ENCODE measurements at regions of chr16 and their contacts with region 1.

Region 1: GRCh38 chr16:56324406-56324805 is 100.9 kb downstream of the AMFR start:
- DNase-seq: no peak
- H3K4me3 ChIP-seq: no peak overlapping the region
- H3K27ac ChIP-seq: no peak overlapping the region
- H3K4me1 ChIP-seq: no peaks in the 10 kb centered on the region
- H3K27me3 ChIP-seq: no peaks in the 10 kb centered on the region
- CTCF ChIP-seq: no peak
- EP300 ChIP-seq: no peak
- POLR2A ChIP-seq: no peak

Region 2: DNA sequence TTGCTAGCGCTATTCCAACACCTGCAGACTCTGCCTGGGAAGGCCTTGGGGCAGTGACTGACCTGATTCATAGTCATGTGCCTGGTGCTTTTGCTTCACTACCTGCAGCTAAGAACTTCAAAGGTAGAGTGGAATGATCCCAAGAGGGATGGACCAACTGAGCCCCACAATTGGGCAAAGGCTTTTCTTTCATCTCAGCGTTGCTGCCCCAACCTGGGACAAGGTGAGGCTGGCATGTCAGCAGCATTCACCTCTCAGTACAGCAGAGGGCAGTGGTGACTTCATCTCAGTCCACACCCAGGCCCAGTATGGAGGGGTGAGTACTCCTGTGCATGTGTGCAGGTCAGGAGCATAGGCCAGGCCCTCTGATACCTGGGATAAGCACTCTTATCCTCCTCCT is 282.7 kb before region 1 on chr16:
- in situ Hi-C with region 1: loop called in 2 of 4 experiments (anchors 10 to 25 kb)
- intact Hi-C with region 1: loop called (anchors 10 kb)
- DNase-seq: peak; percentile 14
- H3K4me3 ChIP-seq: no peak overlapping the region
- H3K27ac ChIP-seq: no peak overlapping the region
- H3K4me1 ChIP-seq: no peaks in the 10 kb centered on the region
- H3K27me3 ChIP-seq: no peaks in the 10 kb centered on the region
- CTCF ChIP-seq: peak in 4 of 5 experiments; percentile 7 to 15 (median 12)
- EP300 ChIP-seq: no peak
- POLR2A ChIP-seq: no peak

Region 3: DNA sequence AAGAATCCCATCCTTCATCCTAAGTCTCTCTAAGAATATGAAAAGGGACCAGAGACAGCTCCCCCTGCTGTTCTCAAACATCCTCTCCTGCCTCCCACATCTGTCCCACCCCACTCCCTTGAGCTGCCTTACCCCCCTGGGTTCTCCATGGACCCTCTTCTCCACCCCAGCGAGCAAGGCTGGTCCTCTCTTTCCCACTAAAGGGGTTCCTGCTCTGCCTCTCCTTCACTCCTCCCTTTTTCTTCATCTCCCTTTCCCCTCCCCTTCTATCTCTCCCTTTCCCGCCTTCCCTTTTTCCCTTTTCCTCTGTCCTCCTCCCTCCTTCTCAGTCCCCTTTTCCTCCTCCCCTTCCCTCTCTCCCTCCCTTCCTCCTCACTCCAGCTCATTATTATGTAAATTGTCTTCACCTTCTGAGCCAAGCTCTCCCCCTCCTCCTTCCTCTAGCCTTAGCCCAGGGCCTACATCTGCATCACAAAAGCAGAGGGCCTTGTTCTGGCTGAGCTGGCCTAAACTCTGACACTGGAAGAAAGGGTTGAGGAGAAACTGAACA is 43.1 kb before region 1 on chr16:
- in situ Hi-C with region 1: no loop called
- intact Hi-C with region 1: no loop called
- DNase-seq: no peak
- H3K4me3 ChIP-seq: no peak overlapping the region
- H3K27ac ChIP-seq: no peak overlapping the region
- H3K4me1 ChIP-seq: peaks cover 0 to 3% (median 0%) of the 10 kb centered on the region in 4 donors
- H3K27me3 ChIP-seq: no peaks in the 10 kb centered on the region
- CTCF ChIP-seq: peak in 2 of 5 experiments; percentile 5 to 13
- EP300 ChIP-seq: no peak
- POLR2A ChIP-seq: no peak

Measured in transverse colon (tissue), 4 donors.